ENCODE measurements at regions of chr19 and their contacts with region 1.

Region 1: DNA sequence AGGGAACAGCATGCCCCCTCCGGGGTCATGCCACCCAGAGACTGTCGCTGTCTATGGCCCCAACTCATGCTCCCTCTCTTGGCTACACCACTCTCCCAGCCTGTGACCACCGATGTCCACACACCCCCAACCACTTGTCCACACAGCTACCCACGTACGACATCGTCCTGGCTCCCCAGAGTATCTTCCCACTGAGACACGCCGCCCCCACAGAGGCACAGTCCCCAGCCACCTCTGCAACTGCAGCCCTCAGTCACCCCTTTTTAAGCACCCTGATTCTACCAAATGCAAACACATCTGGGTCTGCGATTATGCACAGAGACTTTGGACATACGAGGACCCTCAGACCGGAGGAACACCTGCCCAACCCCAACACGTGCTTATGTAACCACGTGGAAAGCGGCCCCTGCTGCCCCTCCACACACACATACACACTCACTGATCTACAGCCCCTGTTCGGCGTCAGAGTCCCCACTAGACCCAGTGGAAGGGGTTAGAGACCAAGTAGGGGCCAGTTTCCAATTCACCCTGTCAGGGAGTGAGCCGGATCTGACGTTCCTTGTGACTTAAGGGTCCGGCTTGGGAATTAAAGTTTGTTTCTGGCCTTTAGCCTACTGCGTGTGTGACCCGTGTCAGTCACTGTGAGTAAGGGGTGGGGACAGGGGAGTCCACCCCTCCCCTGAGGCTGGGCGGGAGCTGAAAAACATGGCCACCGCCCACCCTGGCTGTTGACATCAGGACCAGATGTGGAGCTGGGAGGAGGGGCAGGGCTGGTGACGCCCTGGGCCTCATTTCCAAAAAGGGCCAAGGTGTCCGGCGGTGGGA is 11.9 kb upstream of the AXL start:
- DNase-seq: no peak
- H3K4me3 ChIP-seq: peak overlapping the region in 3 of 4 donors; percentile 3 to 33 (median 8)
- H3K27ac ChIP-seq: peak overlapping the region; percentile 49 to 63 (median 53)
- H3K4me1 ChIP-seq: peaks cover 0 to 6% (median 0%) of the 10 kb centered on the region in 4 donors
- H3K27me3 ChIP-seq: no peaks in the 10 kb centered on the region
- CTCF ChIP-seq: no peak
- EP300 ChIP-seq: no peak
- POLR2A ChIP-seq: no peak

Region 2: DNA sequence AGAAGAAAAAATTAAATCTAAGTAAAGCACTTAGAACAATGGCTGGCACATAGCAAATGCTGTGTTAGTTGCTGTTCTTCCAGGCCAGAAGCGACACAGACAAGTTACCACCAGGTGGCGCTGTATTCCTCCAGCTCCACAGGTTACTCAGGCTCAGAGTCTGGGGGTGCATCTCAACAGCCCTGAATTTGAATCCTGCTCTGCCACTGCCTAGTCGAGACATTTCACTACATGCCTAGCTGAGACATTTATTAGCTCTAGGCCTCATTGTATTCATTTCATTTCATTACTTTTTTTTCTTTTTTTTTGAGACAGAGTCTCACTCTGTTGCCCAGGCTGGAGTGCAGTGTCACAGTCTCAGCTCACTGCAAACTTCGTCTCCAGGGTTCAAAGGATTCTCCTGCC is 232.5 kb before region 1 on chr19:
- intact Hi-C with region 1: no loop called
- DNase-seq: peak; percentile 93
- H3K4me3 ChIP-seq: no peak overlapping the region
- H3K27ac ChIP-seq: no peak overlapping the region
- H3K4me1 ChIP-seq: no peaks in the 10 kb centered on the region
- H3K27me3 ChIP-seq: peaks cover 0 to 43% (median 0%) of the 10 kb centered on the region in 4 donors
- CTCF ChIP-seq: peak; percentile 66 to 86 (median 78)
- EP300 ChIP-seq: no peak
- POLR2A ChIP-seq: no peak

Region 3: DNA sequence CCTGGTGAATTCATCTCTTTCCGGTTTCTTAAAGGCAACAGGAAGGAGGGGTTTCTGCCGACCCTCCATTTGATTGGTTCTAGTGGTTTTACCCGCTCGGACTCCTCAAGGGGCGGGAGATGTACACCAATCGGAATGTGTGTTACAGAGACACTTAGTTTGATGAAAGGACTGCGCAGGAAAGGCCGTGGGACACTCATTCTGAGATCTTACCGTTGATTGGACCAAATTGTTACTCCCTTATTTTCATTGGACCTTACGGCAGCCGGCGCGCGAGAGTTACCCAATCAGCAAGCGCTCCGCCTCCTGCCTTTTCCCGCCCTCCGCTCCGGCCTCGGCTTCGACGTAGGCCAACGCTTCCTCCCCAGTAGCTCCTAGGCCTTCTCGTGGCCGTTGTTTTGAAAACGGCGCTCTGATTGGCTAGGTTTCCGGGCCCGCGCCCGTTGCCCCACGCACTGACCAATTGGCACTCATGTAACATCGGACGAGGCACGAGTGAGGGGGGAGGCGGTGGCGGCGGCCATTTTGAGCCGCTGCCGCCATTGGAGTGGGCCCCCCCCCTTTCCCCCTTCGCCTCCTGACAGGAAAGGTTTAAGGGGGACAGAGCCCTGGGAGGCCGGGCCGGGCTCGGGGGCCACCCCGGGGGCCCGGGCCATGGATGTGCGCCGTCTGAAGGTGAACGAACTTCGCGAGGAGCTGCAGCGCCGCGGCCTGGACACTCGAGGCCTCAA is 56.9 kb after region 1 on chr19 and contains the start of gene HNRNPUL1:
- intact Hi-C with region 1: loop called (anchors 1 kb)
- DNase-seq: peak; percentile 100
- H3K4me3 ChIP-seq: peak within 1 kb of the TSS; percentile 86 to 100 (median 92)
- H3K27ac ChIP-seq: peak within 1 kb of the TSS; percentile 99 to 100 (median 99)
- H3K4me1 ChIP-seq: peaks cover 34 to 44% (median 40%) of the 10 kb centered on the region in 4 donors
- H3K27me3 ChIP-seq: no peaks in the 10 kb centered on the region
- CTCF ChIP-seq: peak in 2 of 3 experiments; percentile 16 to 24
- EP300 ChIP-seq: no peak
- POLR2A ChIP-seq: no peak
- total RNA-seq, gene HNRNPUL1: 148 to 207 (median 179) TPM

Region 4: DNA sequence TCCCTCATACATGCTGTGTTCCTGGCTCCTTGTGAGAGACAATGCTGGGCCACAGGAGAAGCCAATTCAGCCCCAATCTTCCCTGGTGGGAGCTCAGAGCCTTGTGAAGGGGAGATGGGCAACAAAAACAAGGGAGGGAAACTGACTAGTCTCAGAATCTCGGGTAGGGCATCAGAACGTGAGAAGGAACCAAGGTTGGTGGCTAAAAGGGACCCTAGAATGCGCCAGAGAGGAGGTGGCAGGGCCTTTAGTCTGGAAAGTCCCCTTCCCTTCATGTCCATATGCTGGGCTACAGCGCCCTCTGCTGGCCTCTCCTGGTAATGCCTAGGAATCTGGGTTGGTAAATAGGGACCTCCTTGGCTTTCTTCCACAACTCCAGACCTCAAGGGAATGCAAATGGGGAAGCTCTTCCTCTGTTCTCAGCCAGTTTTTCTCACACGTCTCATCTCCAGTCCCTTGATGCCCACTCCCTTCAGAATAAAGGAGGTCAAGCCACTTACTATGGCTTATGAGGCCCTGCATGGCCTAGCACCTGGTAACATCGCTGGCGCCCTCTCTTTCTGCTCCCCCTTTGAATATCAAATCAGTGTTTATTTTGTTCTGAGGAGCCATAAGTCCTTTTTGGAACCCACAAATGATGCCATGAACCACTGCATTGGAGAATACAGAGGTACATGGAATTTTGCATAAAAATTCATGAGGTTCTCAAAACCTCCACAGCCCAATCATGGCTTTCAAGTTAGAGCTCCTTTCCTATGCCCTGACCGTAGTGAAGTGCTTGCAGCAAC is 101.4 kb after region 1 on chr19:
- intact Hi-C with region 1: loop called (anchors 1 kb)
- DNase-seq: peak; percentile 99
- H3K4me3 ChIP-seq: peak overlapping the region; percentile 74 to 94 (median 78)
- H3K27ac ChIP-seq: peak overlapping the region; percentile 88 to 98 (median 95)
- H3K4me1 ChIP-seq: peaks cover 30 to 50% (median 43%) of the 10 kb centered on the region in 4 donors
- H3K27me3 ChIP-seq: no peaks in the 10 kb centered on the region
- CTCF ChIP-seq: peak; percentile 95 to 99 (median 97)
- EP300 ChIP-seq: no peak
- POLR2A ChIP-seq: peak; percentile 22

Measured in esophagus muscularis mucosa (tissue), 4 donors.